ENCODE measurements at regions of chr5 and their contacts with region 1.

Region 1: DNA sequence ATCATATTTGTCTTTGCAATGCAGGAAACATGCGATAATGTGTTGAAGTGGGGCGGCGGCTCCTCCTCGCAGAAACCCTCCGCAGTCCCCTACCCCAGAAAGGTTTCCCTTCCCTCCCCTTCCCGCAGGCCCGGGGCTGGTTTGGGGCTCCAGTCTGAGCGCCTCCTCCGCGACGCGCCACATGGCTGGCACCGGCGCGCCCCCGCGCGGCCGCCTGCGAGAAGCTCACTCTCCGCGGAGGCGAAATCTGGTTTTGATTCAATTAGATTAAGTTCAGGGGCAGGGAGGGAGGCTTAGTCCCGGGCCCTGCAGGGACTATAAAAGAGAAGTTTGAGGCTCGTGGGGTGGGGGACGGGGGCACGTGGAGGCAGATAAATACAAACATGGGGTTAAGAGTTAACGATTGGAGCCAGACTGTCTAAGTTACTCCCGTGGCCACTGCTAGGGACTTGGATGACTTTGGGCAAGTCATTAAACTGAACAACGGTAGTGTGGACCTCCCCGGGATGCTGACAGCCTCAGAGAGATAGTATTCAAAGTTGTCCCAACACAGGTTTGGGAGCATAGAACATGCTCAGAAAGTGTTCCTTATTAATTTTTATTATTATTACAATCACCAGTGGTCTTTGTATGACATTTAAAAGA is 69.4 kb downstream of the MSX2 start:
- DNase-seq: peak; percentile 46 to 77 (median 74)
- ATAC-seq: peak; percentile 52 to 74
- H3K4me3 ChIP-seq: no peak overlapping the region
- H3K27ac ChIP-seq: no peak overlapping the region
- H3K4me1 ChIP-seq: no peaks in the 10 kb centered on the region
- H3K27me3 ChIP-seq: no peaks in the 10 kb centered on the region

Region 2: GRCh38 chr5:174327317-174328236 is 466.2 kb before region 1 on chr5:
- intact Hi-C with region 1: loop called in 1 of 4 experiments (anchors 10 kb)
- DNase-seq: peak; percentile 53 to 78 (median 66)
- ATAC-seq: peak; percentile 42 to 69
- H3K4me3 ChIP-seq: no peak overlapping the region
- H3K27ac ChIP-seq: no peak overlapping the region
- H3K4me1 ChIP-seq: no peaks in the 10 kb centered on the region
- H3K27me3 ChIP-seq: no peaks in the 10 kb centered on the region

Region 3: DNA sequence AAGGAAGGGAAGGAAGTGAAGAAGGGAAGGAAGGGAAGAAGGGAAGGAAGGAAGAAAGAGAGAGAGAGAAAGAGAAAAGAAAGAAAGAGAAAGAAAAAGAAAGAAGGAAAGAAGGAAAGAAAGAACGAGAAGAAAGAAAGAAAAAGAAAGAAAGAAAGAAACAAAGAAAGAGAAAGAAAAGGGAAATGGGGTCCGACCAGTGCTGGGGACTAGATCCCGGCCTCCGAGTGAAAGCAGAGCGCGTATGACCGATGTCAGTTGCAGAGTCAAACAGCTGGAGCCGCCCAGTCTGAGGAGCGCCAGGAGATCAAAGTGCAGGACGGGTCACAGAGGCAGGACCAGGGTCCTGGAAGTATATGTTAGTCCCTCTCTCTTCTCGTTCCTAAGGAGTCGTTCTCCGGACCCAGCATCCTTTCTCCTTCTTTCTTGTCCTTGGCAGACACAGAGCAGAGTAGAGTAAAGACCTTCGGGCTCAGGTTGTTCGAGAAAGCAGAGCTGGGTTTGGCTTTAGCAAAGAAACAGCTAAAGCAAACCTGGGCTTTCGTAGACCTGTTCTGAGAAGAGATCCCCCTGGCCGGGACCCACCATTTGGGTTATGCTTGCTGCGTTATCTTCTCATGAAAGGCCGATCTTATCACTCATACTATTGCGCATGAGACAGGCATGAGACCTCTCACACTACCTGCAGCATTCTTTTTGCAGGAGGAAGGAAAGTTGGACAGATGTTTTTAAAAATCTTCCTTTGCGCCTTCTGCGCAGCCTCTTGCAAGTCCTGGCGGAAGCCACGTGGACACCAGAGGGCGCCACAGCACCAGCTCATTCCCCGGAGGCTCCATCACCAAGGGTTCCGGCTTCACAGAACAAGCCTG is 374.6 kb before region 1 on chr5:
- intact Hi-C with region 1: loop called (anchors 1 to 10 kb)
- DNase-seq: peak; percentile 88 to 95 (median 94)
- ATAC-seq: peak; percentile 88 to 94
- H3K4me3 ChIP-seq: no peak overlapping the region
- H3K27ac ChIP-seq: no peak overlapping the region
- H3K4me1 ChIP-seq: no peaks in the 10 kb centered on the region
- H3K27me3 ChIP-seq: peaks cover 3% of the 10 kb centered on the region

Region 4: GRCh38 chr5:174424219-174425053 is 369.4 kb before region 1 on chr5:
- intact Hi-C with region 1: loop called (anchors 1 to 10 kb)
- DNase-seq: no peak
- ATAC-seq: no peak
- H3K4me3 ChIP-seq: no peak overlapping the region
- H3K27ac ChIP-seq: no peak overlapping the region
- H3K4me1 ChIP-seq: no peaks in the 10 kb centered on the region
- H3K27me3 ChIP-seq: no peaks in the 10 kb centered on the region

Region 5: DNA sequence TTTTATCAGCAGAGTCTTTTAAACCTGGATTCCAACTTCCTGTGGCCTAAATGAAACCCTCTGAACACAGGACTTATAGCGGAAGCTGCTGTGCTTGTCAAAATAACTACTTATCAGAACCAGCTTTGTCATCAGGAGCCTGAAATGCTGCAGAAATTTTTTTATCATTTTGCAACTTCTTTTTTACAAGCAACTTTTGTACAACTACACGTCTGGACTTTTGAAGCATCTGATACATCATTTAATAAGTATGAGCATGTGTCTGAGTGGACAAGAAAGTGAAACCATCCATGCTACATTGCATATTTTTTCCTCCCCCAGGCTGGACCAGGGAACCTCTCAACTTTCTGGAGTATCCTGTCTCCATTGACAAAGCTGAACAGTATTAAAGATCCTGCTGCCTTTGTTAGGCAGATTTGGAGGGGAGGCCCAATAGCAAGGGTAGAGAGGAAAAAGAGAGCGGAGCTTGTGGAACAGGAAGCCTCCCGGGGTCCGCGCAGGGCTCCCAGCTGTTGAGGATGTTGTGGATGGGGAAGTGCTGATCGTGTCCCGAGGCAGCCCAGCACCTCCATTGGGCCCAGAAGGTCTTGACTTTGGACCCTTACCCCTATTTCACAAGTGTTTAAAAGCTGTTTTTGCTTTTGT is 127.2 kb after region 1 on chr5:
- intact Hi-C with region 1: no loop called
- DNase-seq: no peak
- ATAC-seq: no peak
- H3K4me3 ChIP-seq: no peak overlapping the region
- H3K27ac ChIP-seq: no peak overlapping the region
- H3K4me1 ChIP-seq: peaks cover 2% of the 10 kb centered on the region
- H3K27me3 ChIP-seq: no peaks in the 10 kb centered on the region